ENCODE measurements at regions of chr1 and their contacts with region 1.

Region 1: GRCh38 chr1:85200870-85201339 is at the start of gene SYDE2:
- DNase-seq: peak; percentile 67
- H3K4me3 Mint-ChIP-seq: peak within 1 kb of the TSS; percentile 94
- H3K27ac Mint-ChIP-seq: peak within 1 kb of the TSS; percentile 88
- H3K4me1 Mint-ChIP-seq: peaks cover 18% of the 10 kb centered on the region
- H3K27me3 Mint-ChIP-seq: peaks cover 40% of the 10 kb centered on the region
- total RNA-seq, gene SYDE2: 0.76 and 0.83 TPM in 2 replicates

Region 2: GRCh38 chr1:85048296-85049064 is 152.4 kb before region 1 on chr1 and contains the start of gene MCOLN3:
- intact Hi-C with region 1: loop called (anchors 5 kb)
- DNase-seq: peak; percentile 28
- H3K4me3 Mint-ChIP-seq: peak within 1 kb of the TSS; percentile 83
- H3K27ac Mint-ChIP-seq: no peak within 1 kb of the TSS
- H3K4me1 Mint-ChIP-seq: peaks cover 37% of the 10 kb centered on the region
- H3K27me3 Mint-ChIP-seq: peaks cover 52% of the 10 kb centered on the region
- total RNA-seq, gene MCOLN3: 1.3 and 1.7 TPM in 2 replicates

Region 3: DNA sequence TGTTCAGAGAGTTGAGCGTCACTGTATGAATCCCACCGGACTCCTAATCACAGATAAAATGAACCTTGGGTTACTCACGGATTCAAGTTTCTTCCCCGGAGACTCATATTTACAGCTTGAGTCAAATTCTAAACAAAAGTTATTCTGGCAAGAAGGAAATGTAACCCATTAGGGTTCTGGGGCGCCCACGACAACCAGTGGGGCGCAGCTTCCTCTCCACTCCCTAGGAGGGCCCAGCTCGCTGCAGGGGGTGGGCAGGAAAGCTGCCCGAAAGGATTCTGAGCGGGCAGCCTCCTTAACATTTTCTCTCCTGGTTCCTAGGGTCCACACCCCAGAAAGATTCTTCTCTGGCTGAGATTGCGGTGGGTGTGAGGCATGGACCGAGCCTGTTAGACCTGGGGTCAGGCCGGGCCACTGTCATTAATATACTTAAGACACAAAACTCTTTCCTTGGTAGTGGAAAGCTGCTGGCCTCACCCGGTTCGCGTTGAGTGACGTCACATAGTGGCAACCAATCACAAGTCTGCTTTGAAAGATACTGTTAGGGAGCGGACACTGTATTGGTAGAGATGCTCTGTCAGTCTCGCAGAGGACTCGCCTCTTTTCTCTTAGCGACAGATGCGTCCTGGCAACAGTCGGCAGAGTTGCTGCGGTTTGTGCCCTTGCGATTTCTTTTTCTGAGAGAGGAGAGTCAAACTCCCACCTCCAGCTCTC is 139.0 kb before region 1 on chr1:
- intact Hi-C with region 1: loop called (anchors 2 kb)
- DNase-seq: peak; percentile 87
- H3K4me3 Mint-ChIP-seq: peak overlapping the region; percentile 85
- H3K27ac Mint-ChIP-seq: peak overlapping the region; percentile 62
- H3K4me1 Mint-ChIP-seq: peaks cover 15% of the 10 kb centered on the region
- H3K27me3 Mint-ChIP-seq: peaks cover 16% of the 10 kb centered on the region

Region 4: DNA sequence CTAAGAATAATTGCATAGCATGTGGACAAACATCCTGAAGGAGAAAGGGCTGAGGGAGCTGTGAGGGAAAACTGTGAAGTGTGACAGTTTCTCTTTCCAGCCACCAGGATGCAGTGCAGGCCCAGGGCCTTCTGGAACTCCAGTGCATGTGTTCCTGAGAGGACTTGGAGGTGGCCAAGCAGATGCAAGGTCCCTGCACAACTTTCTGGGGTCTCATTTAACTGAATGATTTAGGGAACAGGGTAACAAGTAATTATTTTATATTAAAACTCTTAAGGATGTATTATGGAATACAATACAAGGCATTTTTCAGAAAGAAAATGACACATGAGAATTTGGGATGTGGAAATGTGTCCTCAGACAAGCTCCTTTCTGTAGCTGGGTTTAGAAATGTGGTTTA is 91.4 kb before region 1 on chr1:
- intact Hi-C with region 1: loop called (anchors 2 kb)
- DNase-seq: peak; percentile 20
- H3K4me3 Mint-ChIP-seq: no peak overlapping the region
- H3K27ac Mint-ChIP-seq: no peak overlapping the region
- H3K4me1 Mint-ChIP-seq: no peaks in the 10 kb centered on the region
- H3K27me3 Mint-ChIP-seq: peaks cover 5% of the 10 kb centered on the region

Measured in activated T-helper 1 cell treated with anti-CD3 and anti-CD28 coated beads, Interleukin-12 subunit alpha, Interleukin-12 subunit beta, Interleukin-2, Interleukin-4 antibody, amounts not matched to agents 30 ng/mL and 10 ng/mL and 1 ng/mL, durations not matched to agents 14 hours and 24 hours and 36 hours (primary cell).